Panc1 (cell line): ENCODE measurements at regions of chr1 and their contacts with region 1.

Region 1: GRCh38 chr1:167121375-167122120 is 27.7 kb downstream of the STYXL2 start:
- DNase-seq: no peak
- ATAC-seq: peak; percentile 83
- H3K4me3 ChIP-seq: peak overlapping the region; percentile 40 to 47
- H3K27ac ChIP-seq: no peak overlapping the region
- H3K4me1 ChIP-seq: no peaks in the 10 kb centered on the region
- H3K27me3 ChIP-seq: peaks cover 3% of the 10 kb centered on the region
- CTCF ChIP-seq: no peak

Region 2: DNA sequence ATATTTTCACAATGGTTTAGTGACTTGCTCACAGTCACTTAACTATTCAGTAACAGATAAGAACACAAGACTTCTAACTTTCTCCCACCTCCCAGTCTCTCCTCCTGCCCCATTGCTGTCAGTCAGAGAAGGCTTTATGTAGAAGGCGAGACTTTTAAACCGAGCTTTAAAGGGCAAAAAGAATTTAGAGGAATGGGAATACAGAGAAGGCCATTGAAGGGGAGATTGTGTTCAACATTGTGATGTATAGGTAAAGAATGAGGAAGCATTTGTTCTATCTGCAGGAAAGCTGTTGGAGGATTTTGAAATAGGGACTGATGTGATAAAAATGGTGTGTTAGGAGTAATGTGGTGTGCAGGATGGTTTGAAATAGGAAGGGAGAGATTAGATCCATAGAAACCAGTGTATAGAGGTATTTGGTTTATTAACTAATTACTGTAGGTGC is 106.4 kb after region 1 on chr1:
- CTCF ChIA-PET with region 1: no interaction called
- POLR2A ChIA-PET with region 1: no interaction called
- in situ Hi-C with region 1: no loop called
- intact Hi-C with region 1: no loop called
- DNase-seq: no peak
- ATAC-seq: no peak
- H3K4me3 ChIP-seq: no peak overlapping the region
- H3K27ac ChIP-seq: 0 out of 2 replicates have a peak overlapping the region, but pooled peaks have one; percentile 42
- H3K4me1 ChIP-seq: peaks cover 22% of the 10 kb centered on the region
- H3K27me3 ChIP-seq: no peaks in the 10 kb centered on the region
- CTCF ChIP-seq: no peak

Region 3: DNA sequence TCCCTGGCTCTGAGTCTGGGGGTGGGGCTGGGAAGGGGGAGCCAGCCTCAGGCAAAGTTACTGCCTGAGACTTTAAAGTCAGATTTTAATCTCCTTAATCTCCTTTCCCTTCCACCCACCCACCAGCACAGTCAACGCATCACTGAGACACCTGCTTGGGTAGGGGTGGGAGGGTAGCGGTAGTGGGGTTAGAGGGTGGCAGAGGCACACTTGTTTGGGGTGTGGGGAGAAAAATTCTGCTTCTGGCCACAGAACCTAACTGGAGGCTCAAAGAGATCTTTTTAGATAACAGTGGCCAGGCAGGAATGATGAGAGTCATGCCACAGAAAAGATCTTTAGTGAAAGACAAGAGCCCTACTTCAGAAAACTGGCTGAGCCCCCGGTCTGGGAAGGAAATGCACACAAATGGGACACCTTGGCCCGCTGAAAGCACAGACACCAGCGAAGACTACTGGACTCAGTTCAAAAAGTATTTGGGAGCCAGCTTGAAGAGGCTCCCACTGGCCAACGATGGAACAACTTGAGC is 352.7 kb after region 1 on chr1:
- CTCF ChIA-PET with region 1: interaction called, 11 read pairs
- POLR2A ChIA-PET with region 1: no interaction called
- in situ Hi-C with region 1: no loop called
- intact Hi-C with region 1: no loop called
- DNase-seq: no peak
- ATAC-seq: no peak
- H3K4me3 ChIP-seq: no peak overlapping the region
- H3K27ac ChIP-seq: no peak overlapping the region
- H3K4me1 ChIP-seq: no peaks in the 10 kb centered on the region
- H3K27me3 ChIP-seq: 0 out of 2 replicates have a peak, but pooled peaks cover 4% of the 10 kb centered on the region
- CTCF ChIP-seq: no peak